A673 (cell line): ENCODE measurements at regions of chr10 and their contacts with region 1.

Region 1: GRCh38 chr10:76962851-76963250 is 674.8 kb downstream of the KCNMA1 start:
- DNase-seq: peak; percentile 38
- H3K4me3 ChIP-seq: no peak overlapping the region
- H3K27ac ChIP-seq: peak overlapping the region; percentile 45
- H3K4me1 ChIP-seq: peaks cover 9% of the 10 kb centered on the region
- H3K27me3 ChIP-seq: no peaks in the 10 kb centered on the region
- CTCF ChIP-seq: no peak

Region 2: DNA sequence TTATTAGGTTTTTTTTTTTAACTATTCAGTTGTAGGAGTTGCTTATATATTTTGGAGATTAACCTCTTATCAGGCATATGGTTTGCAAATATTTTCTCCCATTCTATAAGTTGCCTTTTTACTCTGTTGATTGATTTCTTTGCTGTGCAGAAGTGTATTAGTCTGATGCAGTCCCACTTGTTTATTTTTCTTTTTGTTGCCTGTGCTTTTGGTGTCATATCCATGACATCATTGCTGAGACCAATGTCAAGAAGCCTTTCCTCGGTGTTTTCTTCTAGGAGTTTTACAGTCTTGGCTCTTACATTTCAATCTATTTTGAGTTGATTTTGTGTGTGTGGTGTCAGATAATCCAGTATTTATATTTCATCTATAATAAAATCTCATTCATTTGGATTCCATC is 1376.0 kb before region 1 on chr10:
- CTCF ChIA-PET with region 1: no interaction called
- POLR2A ChIA-PET with region 1: interaction called, 15 read pairs
- intact Hi-C with region 1: no loop called
- DNase-seq: no peak
- H3K4me3 ChIP-seq: no peak overlapping the region
- H3K27ac ChIP-seq: no peak overlapping the region
- H3K4me1 ChIP-seq: no peaks in the 10 kb centered on the region
- H3K27me3 ChIP-seq: peaks cover 6% of the 10 kb centered on the region
- CTCF ChIP-seq: no peak

Region 3: GRCh38 chr10:76643511-76643911 is 319.3 kb before region 1 on chr10:
- CTCF ChIA-PET with region 1: no interaction called
- POLR2A ChIA-PET with region 1: no interaction called
- intact Hi-C with region 1: no loop called
- DNase-seq: no peak
- H3K4me3 ChIP-seq: no peak overlapping the region
- H3K27ac ChIP-seq: no peak overlapping the region
- H3K4me1 ChIP-seq: no peaks in the 10 kb centered on the region
- H3K27me3 ChIP-seq: no peaks in the 10 kb centered on the region
- CTCF ChIP-seq: no peak

Region 4: DNA sequence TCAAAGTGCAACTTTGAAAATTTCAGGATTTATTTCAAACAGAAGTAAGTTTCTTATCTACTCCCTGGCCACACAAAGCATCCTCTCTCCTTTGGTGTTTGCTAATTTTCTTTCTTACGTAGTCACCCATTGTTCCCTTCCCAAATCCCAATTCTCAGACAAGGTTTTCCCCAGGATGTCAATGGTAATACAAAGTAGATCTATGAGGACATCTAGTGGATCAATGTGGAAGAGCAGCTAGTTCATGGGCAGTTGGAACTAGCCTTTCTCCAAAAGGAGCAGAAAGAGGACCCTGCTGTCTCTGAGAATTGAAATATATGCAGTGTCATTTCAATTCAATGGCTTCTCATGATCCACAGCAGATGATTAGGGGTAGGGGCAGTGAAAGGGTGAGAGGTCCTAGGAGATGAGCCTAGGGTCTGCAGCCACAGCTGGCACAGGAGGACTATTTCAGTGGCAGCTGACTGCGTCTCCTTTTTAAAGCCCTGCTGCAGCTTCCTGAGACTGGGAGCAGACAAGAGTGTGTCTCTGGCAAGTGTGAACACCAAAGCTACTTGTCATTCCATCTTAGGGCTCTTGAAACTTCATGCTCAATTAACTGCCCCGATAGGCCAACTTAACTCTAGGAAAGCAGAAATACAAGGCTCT is 42.2 kb after region 1 on chr10:
- CTCF ChIA-PET with region 1: no interaction called
- POLR2A ChIA-PET with region 1: interaction called, 19 read pairs
- intact Hi-C with region 1: no loop called
- DNase-seq: peak; percentile 70
- H3K4me3 ChIP-seq: no peak overlapping the region
- H3K27ac ChIP-seq: no peak overlapping the region
- H3K4me1 ChIP-seq: no peaks in the 10 kb centered on the region
- H3K27me3 ChIP-seq: peaks cover 17% of the 10 kb centered on the region
- CTCF ChIP-seq: peak; percentile 83